Activated CD8-positive, alpha-beta T cell treated with anti-CD3 and anti-CD28 coated beads, Interleukin-2, amount 10 ng/mL, durations not matched to agents 7 days and 5 days (primary cell): ENCODE measurements at regions of chr19 and their contacts with region 1.

Region 1: GRCh38 chr19:19531951-19532805 is 3.5 kb downstream of the YJEFN3 start:
- DNase-seq: peak; percentile 88
- ATAC-seq: peak; percentile 87
- H3K4me3 Mint-ChIP-seq: no peak overlapping the region
- H3K27ac Mint-ChIP-seq: no peak overlapping the region
- H3K4me1 Mint-ChIP-seq: peaks cover 10% of the 10 kb centered on the region
- H3K27me3 Mint-ChIP-seq: peaks cover 3% of the 10 kb centered on the region

Region 2: GRCh38 chr19:19515764-19516519 is 16.2 kb before region 1 on chr19 and contains the start of gene NDUFA13:
- CTCF ChIA-PET with region 1: interaction called, 10 read pairs
- POLR2A ChIA-PET with region 1: interaction called, 8 read pairs
- DNase-seq: peak; percentile 95
- ATAC-seq: peak; percentile 91
- H3K4me3 Mint-ChIP-seq: peak within 1 kb of the TSS; percentile 94
- H3K27ac Mint-ChIP-seq: peak within 1 kb of the TSS; percentile 94
- H3K4me1 Mint-ChIP-seq: peaks cover 37% of the 10 kb centered on the region
- H3K27me3 Mint-ChIP-seq: no peaks in the 10 kb centered on the region
- total RNA-seq, gene NDUFA13: 388 to 413 TPM

Region 3: GRCh38 chr19:19554074-19555023 is 22.2 kb after region 1 on chr19:
- CTCF ChIA-PET with region 1: interaction called, 18 read pairs
- POLR2A ChIA-PET with region 1: interaction called, 4 read pairs
- DNase-seq: peak; percentile 70
- ATAC-seq: peak; percentile 61
- H3K4me3 Mint-ChIP-seq: no peak overlapping the region
- H3K27ac Mint-ChIP-seq: no peak overlapping the region
- H3K4me1 Mint-ChIP-seq: peaks cover 13% of the 10 kb centered on the region
- H3K27me3 Mint-ChIP-seq: no peaks in the 10 kb centered on the region

Region 4: GRCh38 chr19:19578252-19578651 is 46.1 kb after region 1 on chr19:
- CTCF ChIA-PET with region 1: interaction called, 10 read pairs
- POLR2A ChIA-PET with region 1: no interaction called
- DNase-seq: no peak
- ATAC-seq: no peak
- H3K4me3 Mint-ChIP-seq: no peak overlapping the region
- H3K27ac Mint-ChIP-seq: no peak overlapping the region
- H3K4me1 Mint-ChIP-seq: peaks cover 35% of the 10 kb centered on the region
- H3K27me3 Mint-ChIP-seq: no peaks in the 10 kb centered on the region

Region 5: DNA sequence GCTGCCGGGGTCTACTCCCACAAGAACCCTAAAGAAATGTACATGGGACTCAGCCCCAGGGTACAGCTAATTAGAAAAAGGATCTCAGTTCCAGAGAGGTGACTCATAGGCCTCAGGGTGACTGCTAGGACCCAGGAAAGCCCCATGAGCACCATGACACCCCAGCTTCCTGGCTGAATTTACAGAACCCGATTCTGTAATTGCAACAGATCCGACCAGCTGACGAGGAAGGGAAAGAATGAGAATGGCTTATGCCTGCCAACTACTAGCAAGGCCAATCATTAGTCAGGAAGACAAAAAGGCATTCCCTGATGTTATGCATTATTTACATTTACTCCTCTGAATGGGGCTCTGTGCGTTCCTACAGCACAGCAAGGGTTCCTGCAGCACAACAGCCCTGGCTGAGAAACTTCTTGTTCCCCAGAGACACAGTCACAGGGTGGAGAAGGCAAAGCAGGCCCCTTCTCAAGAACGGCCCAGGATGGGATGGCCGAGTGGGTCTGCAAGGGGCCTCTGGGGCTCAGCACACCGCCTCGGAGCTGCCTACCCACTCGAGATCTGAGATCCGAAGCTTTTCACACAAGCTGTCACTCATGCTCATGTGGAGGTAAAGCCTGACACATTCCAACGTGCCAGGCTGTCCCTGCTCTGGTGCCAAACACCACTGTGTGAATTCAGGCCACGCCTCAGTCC is 59.1 kb after region 1 on chr19:
- CTCF ChIA-PET with region 1: interaction called, 15 read pairs
- POLR2A ChIA-PET with region 1: no interaction called
- DNase-seq: peak; percentile 67
- ATAC-seq: peak; percentile 62
- H3K4me3 Mint-ChIP-seq: peak overlapping the region; percentile 52
- H3K27ac Mint-ChIP-seq: peak overlapping the region; percentile 79
- H3K4me1 Mint-ChIP-seq: peaks cover 74% of the 10 kb centered on the region
- H3K27me3 Mint-ChIP-seq: no peaks in the 10 kb centered on the region

Region 6: GRCh38 chr19:19606021-19606420 is 73.8 kb after region 1 on chr19:
- CTCF ChIA-PET with region 1: interaction called, 12 read pairs
- POLR2A ChIA-PET with region 1: interaction called, 3 read pairs
- DNase-seq: peak; percentile 59
- ATAC-seq: peak; percentile 65
- H3K4me3 Mint-ChIP-seq: peak overlapping the region; percentile 32
- H3K27ac Mint-ChIP-seq: peak overlapping the region; percentile 89
- H3K4me1 Mint-ChIP-seq: peaks cover 68% of the 10 kb centered on the region
- H3K27me3 Mint-ChIP-seq: no peaks in the 10 kb centered on the region

Region 7: GRCh38 chr19:19643158-19644053 is 111.2 kb after region 1 on chr19 and contains the start of gene GMIP:
- CTCF ChIA-PET with region 1: interaction called, 29 read pairs
- POLR2A ChIA-PET with region 1: interaction called, 14 read pairs
- DNase-seq: peak; percentile 92
- ATAC-seq: peak; percentile 91
- H3K4me3 Mint-ChIP-seq: peak within 1 kb of the TSS; percentile 98
- H3K27ac Mint-ChIP-seq: peak within 1 kb of the TSS; percentile 94
- H3K4me1 Mint-ChIP-seq: peaks cover 21% of the 10 kb centered on the region
- H3K27me3 Mint-ChIP-seq: no peaks in the 10 kb centered on the region
- total RNA-seq, gene GMIP: 96.7 to 104 TPM

Region 8: GRCh38 chr19:19740755-19741154 is 208.6 kb after region 1 on chr19:
- CTCF ChIA-PET with region 1: no interaction called
- POLR2A ChIA-PET with region 1: no interaction called
- DNase-seq: no peak
- ATAC-seq: no peak
- H3K4me3 Mint-ChIP-seq: no peak overlapping the region
- H3K27ac Mint-ChIP-seq: no peak overlapping the region
- H3K4me1 Mint-ChIP-seq: no peaks in the 10 kb centered on the region
- H3K27me3 Mint-ChIP-seq: no peaks in the 10 kb centered on the region